ENCODE measurements at regions of chr15 and their contacts with region 1.

Region 1: GRCh38 chr15:98881526-98882520 is 125.8 kb downstream of the PGPEP1L start:
- DNase-seq: no peak
- ATAC-seq: no peak

Region 2: GRCh38 chr15:98906712-98907083 is 24.9 kb after region 1 on chr15:
- intact Hi-C with region 1: loop called (anchors 2 kb)
- DNase-seq: no peak
- ATAC-seq: peak; percentile 35